AG04450 (cell line): ENCODE measurements at regions of chr10 and their contacts with region 1.

Region 1: DNA sequence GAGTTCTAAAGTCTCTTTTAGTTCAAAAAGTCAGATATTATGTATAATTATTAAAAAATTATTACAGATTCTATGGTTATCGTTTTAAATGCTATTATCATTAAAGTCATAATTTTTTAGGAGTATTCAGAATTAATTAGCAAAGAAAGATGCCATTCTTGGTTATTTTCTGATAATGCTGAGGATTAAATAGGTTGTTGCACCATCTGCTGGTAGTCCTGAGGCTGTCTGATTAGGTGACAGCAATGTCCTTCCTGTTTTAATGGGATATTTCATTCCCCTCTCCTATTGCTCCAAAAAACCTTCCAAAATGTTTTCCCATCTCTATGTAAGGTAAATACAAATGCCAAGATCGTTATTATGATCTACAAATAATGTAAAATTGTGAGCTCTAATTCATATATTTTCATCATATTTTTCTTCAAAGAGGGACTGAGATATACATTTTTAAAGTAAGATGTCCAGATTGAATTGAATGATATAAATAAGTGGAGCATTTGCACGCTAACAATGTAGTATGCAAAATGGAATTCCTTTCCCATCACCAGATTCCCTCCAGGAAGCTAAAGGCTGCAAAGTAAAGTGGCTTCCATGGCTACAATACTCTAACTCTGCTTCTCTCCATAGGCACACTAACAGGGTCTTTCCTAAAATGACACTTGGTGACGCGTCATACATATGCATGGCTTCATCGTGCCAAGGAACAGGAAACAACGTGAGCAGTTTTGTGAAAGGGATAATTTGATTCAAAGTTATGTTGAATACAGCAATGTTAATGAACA is 58.8 kb upstream of the AKR1E2 start:
- DNase-seq: no peak
- H3K4me3 ChIP-seq: no peak overlapping the region
- H3K27ac ChIP-seq: no peak overlapping the region
- H3K27me3 ChIP-seq: no peaks in the 10 kb centered on the region
- CTCF ChIP-seq: peak; percentile 68

Region 2: DNA sequence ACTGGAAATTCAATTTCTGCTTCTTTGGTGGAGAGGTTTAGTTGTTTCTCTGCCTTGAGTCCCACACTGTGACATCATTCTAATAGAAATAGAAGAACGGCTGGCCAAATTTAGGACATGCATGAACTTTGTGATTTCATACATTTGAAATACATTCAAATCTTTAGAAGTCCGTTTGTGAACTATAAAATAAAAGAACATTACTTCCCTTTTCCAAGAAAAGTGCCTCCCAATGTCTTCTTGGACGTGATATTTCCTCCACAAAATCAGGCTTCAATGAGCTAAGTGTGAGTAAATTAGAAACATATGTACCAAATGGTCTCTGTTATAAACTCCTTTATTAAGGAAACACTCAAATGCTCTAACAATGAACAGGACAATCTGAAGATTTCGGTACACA is 255.7 kb before region 1 on chr10:
- CTCF ChIA-PET with region 1: interaction called, 10 read pairs
- POLR2A ChIA-PET with region 1: no interaction called
- DNase-seq: no peak
- H3K4me3 ChIP-seq: no peak overlapping the region
- H3K27ac ChIP-seq: no peak overlapping the region
- H3K27me3 ChIP-seq: no peaks in the 10 kb centered on the region
- CTCF ChIP-seq: no peak

Region 3: GRCh38 chr10:4663162-4663904 is 103.9 kb before region 1 on chr10:
- CTCF ChIA-PET with region 1: interaction called, 10 read pairs
- POLR2A ChIA-PET with region 1: interaction called, 7 read pairs
- DNase-seq: peak; percentile 96
- H3K4me3 ChIP-seq: peak overlapping the region; percentile 29
- H3K27ac ChIP-seq: peak overlapping the region; percentile 93
- H3K27me3 ChIP-seq: no peaks in the 10 kb centered on the region
- CTCF ChIP-seq: no peak

Region 4: GRCh38 chr10:4725917-4726606 is 41.2 kb before region 1 on chr10:
- CTCF ChIA-PET with region 1: interaction called, 10 read pairs
- POLR2A ChIA-PET with region 1: interaction called, 4 read pairs
- DNase-seq: peak; percentile 24
- H3K4me3 ChIP-seq: no peak overlapping the region
- H3K27ac ChIP-seq: no peak overlapping the region
- H3K27me3 ChIP-seq: no peaks in the 10 kb centered on the region
- CTCF ChIP-seq: no peak